A549 (cell line): ENCODE measurements at regions of chr12 and their contacts with region 1.

Region 1: GRCh38 chr12:2812290-2813213 is at the start of gene ITFG2:
- DNase-seq: peak; percentile 96 to 99
- ATAC-seq: peak; percentile 97 to 98
- H3K4me3 ChIP-seq: peak within 1 kb of the TSS; percentile 61
- H3K27ac ChIP-seq: peak within 1 kb of the TSS; percentile 92
- H3K4me1 ChIP-seq: peaks cover 12% of the 10 kb centered on the region; the same call in 2 of the 3 replicates
- CTCF ChIP-seq: no peak
- EP300 ChIP-seq: no peak
- POLR2A ChIP-seq: peak; percentile 96
- RAD21 ChIP-seq: no peak
- polyA plus RNA-seq, gene ITFG2: 23.7 and 28.4 TPM in 2 replicates

Region 2: DNA sequence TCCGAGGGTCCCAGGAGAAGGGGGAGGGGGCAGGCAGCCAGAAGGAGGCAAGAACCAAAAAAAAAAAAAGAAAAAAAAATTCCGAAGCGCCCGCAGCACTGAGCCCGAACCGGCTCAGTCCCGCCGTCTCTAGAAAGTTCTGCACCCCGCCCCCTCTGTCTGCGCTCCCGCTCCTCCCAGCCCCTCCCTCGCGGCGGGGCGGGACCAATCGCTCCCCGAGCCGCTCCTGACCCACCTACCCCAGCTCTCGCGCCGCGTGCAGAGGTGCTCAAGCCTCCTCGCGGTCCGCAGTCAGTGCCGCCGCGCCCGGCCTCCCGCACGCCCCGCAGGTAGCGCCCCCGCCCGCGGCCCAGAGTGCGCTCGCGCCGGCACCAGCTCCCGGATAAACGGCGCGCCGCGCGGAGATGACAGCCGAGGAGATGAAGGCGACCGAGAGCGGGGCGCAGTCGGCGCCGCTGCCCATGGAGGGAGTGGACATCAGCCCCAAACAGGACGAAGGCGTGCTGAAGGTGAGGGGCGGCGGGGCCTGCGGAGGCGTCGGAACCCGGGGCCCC is 17.7 kb before region 1 on chr12 and contains the start of gene FKBP4:
- CTCF ChIA-PET with region 1: interaction called, 15 read pairs
- POLR2A ChIA-PET with region 1: interaction called, 19 read pairs
- DNase-seq: peak; percentile 84 to 91
- ATAC-seq: peak; percentile 92 to 94
- H3K4me3 ChIP-seq: peak within 1 kb of the TSS; percentile 76
- H3K27ac ChIP-seq: peak within 1 kb of the TSS; percentile 97 to 99
- H3K4me1 ChIP-seq: peaks cover 18% of the 10 kb centered on the region
- CTCF ChIP-seq: no peak
- EP300 ChIP-seq: no peak
- POLR2A ChIP-seq: peak; percentile 99
- RAD21 ChIP-seq: no peak
- polyA plus RNA-seq, gene FKBP4: 108 and 125 TPM in 2 replicates

Region 3: DNA sequence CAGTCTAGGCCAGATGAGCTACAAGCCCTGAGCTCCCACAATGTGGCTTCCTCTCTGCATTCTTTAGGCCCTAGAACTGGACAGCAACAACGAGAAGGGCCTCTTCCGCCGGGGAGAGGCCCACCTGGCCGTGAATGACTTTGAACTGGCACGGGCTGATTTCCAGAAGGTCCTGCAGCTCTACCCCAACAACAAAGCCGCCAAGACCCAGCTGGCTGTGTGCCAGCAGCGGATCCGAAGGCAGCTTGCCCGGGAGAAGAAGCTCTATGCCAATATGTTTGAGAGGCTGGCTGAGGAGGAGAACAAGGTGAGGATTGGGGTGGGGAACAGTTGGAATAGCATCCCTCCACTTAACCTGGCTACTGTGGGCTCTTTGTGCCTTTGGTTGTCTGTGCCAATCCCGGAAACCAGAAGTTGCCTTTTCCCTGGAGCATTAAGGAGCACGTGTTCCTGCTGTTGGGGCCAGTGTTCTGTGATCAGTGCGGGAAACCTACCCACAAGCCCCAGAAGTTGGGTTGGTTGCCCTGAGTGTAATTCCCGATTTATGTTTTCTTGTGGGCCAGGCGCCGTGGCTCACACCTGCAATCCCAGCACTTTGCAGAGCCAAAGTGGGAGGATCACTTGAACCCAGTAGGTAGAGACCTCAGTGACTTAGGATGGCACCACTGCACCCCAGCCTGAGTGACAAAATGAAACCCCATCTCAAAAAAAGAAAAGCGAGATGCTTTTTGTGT is 11.3 kb before region 1 on chr12:
- CTCF ChIA-PET with region 1: interaction called, 15 read pairs
- POLR2A ChIA-PET with region 1: interaction called, 19 read pairs
- DNase-seq: no peak
- ATAC-seq: no peak
- H3K4me3 ChIP-seq: no peak overlapping the region
- H3K27ac ChIP-seq: no peak overlapping the region
- H3K4me1 ChIP-seq: peaks cover 15% of the 10 kb centered on the region
- CTCF ChIP-seq: no peak
- EP300 ChIP-seq: no peak
- POLR2A ChIP-seq: no peak
- RAD21 ChIP-seq: no peak

Region 4: DNA sequence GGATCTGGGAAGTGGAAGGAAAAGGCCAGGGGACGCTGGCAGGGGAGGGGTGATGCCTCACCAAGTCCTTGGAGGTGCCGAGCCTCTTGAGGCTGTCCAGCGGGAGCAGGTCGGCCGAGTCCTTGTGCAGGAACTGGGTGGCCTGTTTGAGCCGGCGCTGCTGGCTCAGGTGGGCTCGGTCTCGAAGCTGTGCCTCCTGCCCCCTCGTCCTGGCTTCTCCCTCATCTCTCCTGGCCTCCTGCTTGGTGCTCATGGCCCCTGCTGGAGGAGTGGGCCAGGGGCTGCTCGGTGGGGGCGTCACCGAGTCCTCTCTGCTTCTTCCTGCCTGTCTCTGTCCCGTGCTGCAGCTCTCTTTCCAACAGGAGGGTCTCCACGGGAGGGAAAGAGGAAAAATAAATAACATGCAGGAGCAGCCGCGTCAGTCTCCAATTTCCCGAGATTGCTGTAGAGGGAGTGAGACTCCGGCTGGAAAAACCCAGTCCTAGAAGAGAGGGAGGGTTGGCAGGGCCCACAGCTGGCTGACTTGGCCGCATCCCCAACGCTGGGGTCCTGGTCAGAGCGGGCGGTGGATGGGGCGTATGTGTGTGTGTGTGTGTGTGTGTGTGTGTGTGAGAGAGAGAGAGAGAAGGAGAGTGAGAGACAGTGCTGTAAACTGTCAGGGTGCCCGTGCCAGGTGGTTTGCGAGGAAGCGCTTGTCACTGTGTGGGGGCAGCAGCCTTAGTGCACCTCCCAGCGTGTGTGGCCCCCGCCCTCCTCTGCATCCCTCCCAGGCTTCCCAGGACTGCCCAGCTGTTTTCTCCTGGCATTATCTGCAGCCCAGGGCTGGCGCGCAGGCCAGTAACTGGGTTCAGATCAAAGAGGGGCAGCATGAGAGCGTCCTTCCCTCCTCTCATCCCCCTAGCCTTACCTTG is 22.3 kb after region 1 on chr12 and contains the start of gene NRIP2:
- CTCF ChIA-PET with region 1: interaction called, 12 read pairs
- POLR2A ChIA-PET with region 1: no interaction called
- DNase-seq: no peak
- ATAC-seq: no peak; a peak in 2 of 6 replicates
- H3K4me3 ChIP-seq: no peak within 1 kb of the TSS
- H3K27ac ChIP-seq: no peak within 1 kb of the TSS
- H3K4me1 ChIP-seq: no peaks in the 10 kb centered on the region
- CTCF ChIP-seq: no peak
- EP300 ChIP-seq: no peak
- POLR2A ChIP-seq: no peak
- RAD21 ChIP-seq: no peak
- polyA plus RNA-seq, gene NRIP2: not detected in 2 replicates